ENCODE measurements at regions of chr13 and their contacts with region 1.

Region 1: DNA sequence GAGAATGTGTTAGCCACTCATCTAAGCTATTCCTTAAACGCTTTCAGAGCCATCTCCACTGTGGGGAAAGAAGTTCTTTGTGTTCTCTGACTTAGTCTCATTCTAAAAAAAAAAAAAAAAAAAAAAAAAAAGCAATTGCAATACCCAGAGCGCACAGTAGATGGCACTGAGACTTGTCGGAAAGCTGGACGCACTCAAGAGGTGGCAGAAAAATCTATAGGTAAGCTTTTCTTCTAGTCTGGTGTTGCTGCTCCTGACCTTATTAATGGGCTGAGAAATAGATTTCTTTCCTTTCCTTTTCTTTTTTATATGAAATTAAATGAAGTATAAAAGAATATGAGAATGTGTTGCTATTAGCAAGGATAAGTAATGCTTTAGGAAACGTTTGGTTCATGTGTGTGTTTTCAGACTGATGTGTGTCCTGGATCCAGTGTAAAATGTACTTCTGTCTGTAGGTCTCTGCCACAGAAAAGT is 4.7 kb upstream of the GJB2 start:
- DNase-seq: no peak
- H3K4me3 Mint-ChIP-seq: peak overlapping the region; percentile 7
- H3K27ac Mint-ChIP-seq: no peak overlapping the region
- H3K4me1 Mint-ChIP-seq: peaks cover 17% of the 10 kb centered on the region
- H3K27me3 Mint-ChIP-seq: peaks cover 36% of the 10 kb centered on the region

Region 2: GRCh38 chr13:20219577-20219976 is 22.2 kb after region 1 on chr13:
- CTCF ChIA-PET with region 1: interaction called, 4 read pairs
- POLR2A ChIA-PET with region 1: no interaction called
- intact Hi-C with region 1: loop called (anchors 2 kb)
- DNase-seq: no peak
- H3K4me3 Mint-ChIP-seq: peak overlapping the region; percentile 24
- H3K27ac Mint-ChIP-seq: peak overlapping the region; percentile 49
- H3K4me1 Mint-ChIP-seq: peaks cover 19% of the 10 kb centered on the region
- H3K27me3 Mint-ChIP-seq: peaks cover 4% of the 10 kb centered on the region

Region 3: GRCh38 chr13:20301403-20302071 is 104.1 kb after region 1 on chr13:
- CTCF ChIA-PET with region 1: no interaction called
- POLR2A ChIA-PET with region 1: no interaction called
- intact Hi-C with region 1: no loop called
- DNase-seq: no peak
- H3K4me3 Mint-ChIP-seq: no peak overlapping the region
- H3K27ac Mint-ChIP-seq: no peak overlapping the region
- H3K4me1 Mint-ChIP-seq: no peaks in the 10 kb centered on the region
- H3K27me3 Mint-ChIP-seq: peaks cover 49% of the 10 kb centered on the region

Region 4: GRCh38 chr13:20411638-20412360 is 214.4 kb after region 1 on chr13:
- CTCF ChIA-PET with region 1: interaction called, 17 read pairs
- POLR2A ChIA-PET with region 1: no interaction called
- intact Hi-C with region 1: loop called (anchors 2 kb)
- DNase-seq: peak; percentile 75
- H3K4me3 Mint-ChIP-seq: peak overlapping the region; percentile 9
- H3K27ac Mint-ChIP-seq: peak overlapping the region; percentile 78
- H3K4me1 Mint-ChIP-seq: peaks cover 22% of the 10 kb centered on the region
- H3K27me3 Mint-ChIP-seq: no peaks in the 10 kb centered on the region

Region 5: DNA sequence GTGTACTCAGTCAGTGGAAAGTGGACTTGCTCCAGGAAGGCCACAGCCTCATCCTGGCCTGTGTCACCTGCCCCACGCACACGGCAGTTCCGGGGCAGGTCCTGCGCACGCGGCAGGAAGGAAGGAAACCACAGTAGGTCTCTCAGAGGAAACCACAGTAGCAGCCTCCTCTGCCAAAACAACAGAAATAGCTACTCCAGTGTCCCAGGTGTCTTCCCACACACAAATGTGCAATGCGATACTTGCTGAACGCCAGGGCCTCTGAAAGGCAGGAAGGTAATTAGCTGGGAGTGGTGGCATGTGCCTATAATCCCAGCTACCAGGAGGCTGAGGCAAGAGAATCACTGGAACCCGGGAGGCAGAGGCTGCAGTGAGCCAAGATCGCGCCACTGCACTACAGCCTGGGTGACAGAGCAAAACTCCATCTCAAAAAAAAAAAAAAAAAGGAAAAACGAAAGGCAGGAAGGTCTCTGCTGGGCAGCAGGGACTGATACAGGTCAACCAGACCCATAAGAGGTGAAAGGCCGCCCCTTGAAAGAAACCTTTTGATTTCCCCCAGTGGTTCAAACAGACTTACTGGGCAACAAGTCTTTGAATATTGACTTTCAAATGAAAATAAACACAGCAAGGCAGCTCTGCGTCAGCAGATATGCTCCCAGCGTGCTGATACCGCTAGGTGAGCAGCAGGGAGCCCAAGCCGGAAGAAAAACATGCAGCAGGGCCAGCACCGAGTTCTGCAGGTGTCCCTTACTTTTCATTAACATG is 278.7 kb after region 1 on chr13:
- CTCF ChIA-PET with region 1: interaction called, 11 read pairs
- POLR2A ChIA-PET with region 1: no interaction called
- intact Hi-C with region 1: loop called (anchors 5 kb)
- DNase-seq: peak; percentile 83
- H3K4me3 Mint-ChIP-seq: peak overlapping the region; percentile 57
- H3K27ac Mint-ChIP-seq: peak overlapping the region; percentile 84
- H3K4me1 Mint-ChIP-seq: peaks cover 45% of the 10 kb centered on the region
- H3K27me3 Mint-ChIP-seq: no peaks in the 10 kb centered on the region

Region 6: DNA sequence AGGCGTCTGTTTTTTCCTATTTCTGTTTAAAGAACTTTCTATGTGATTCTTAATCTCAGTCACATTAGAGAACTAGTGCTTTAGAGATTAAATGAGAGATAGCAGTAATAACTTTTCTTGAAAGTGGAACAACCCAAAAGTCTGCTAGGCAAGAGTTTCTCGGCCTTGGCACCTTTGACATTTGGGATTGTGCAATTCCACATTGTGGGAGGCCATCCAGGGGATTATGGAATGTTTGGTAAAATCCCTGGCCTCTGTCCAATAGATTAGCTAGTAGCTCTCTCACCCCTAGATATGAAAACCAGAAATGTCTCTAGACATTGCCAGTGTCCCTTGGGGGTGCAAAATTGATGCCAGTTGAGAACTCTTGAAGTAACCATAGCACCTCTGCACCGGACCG is 461.1 kb after region 1 on chr13:
- CTCF ChIA-PET with region 1: no interaction called
- POLR2A ChIA-PET with region 1: no interaction called
- intact Hi-C with region 1: no loop called
- DNase-seq: no peak
- H3K4me3 Mint-ChIP-seq: no peak overlapping the region
- H3K27ac Mint-ChIP-seq: no peak overlapping the region
- H3K4me1 Mint-ChIP-seq: no peaks in the 10 kb centered on the region
- H3K27me3 Mint-ChIP-seq: no peaks in the 10 kb centered on the region

Region 7: DNA sequence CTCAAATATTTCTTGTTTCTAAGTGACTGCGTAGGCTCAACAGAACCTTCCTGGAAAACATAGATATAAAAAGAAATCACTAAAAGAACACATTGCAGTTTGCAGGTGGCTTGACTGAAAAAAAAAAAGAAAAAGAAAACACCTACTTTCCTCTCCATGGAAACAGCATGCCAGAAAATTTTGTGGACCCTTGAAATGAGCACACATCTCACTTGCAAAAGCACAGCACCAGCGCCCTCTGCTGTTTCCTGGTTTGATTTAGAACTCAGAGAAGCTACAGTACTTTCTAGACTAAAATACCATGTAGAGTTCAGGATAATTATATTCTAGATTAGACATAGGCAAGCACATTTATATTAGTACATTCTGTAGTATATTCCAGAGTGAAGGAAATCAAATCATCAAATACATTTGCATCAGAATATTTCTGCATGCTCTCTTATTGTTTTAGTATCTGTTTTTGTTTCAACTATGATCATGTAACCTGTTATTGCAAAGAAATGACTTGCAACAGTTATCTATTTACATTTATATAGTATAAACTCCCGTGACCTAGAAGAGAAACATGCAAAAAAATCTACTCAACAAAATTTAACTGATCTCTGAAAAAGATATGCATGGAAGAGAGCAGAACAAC is 727.5 kb after region 1 on chr13:
- CTCF ChIA-PET with region 1: interaction called, 11 read pairs
- POLR2A ChIA-PET with region 1: no interaction called
- intact Hi-C with region 1: no loop called
- DNase-seq: peak; percentile 77
- H3K4me3 Mint-ChIP-seq: no peak overlapping the region
- H3K27ac Mint-ChIP-seq: no peak overlapping the region
- H3K4me1 Mint-ChIP-seq: no peaks in the 10 kb centered on the region
- H3K27me3 Mint-ChIP-seq: no peaks in the 10 kb centered on the region